Left lung (tissue), 14 donors: ENCODE measurements at regions of chr15 and their contacts with region 1.

Region 1: DNA sequence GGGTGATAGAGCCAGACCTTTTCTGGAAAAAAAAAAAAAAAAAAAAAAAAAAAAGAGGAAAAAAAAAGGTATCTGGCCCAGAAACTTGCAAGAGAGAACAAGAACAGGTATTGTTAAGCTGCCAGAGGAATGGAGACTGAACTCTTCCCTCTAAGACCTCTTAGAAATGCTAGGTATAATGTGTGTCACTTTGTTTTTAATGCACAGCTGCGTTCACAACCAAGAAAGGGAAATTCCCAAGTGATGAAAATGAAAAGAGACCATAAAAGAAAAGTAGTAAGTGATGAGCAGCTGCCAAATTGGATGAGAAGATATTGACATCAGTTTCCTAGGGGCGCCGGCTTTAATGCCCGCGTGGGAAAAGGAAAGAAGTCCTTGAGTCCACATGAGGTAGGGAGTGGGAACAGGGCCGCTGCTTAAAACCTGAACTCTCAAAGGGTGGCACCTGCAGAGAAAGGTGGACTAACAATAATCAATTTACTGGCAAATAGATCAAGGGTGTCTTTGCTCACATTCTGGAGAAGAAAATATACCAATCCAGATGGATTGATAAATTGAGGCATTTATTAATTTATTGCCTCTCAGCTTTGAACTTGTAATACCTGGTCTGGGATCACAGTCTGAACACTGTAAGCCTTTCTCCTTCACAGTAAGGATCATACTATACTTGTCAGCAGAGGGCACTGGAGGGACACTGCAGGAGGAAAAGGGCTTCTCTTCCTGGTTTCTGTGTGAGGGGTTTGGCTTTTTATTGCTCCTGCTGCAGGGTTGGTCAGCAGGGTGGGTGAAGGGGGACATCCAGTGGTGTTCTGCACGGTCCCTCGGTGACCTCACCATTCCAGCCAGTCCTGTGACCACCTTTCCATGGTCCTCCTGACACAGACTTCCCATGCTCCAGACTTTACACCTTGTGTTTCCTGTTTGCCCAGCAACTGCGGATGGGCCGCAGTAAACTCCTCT is 131.6 kb downstream of the AQP9 start:
- DNase-seq: peak in 2 of 4 donors; percentile 24 to 64
- ATAC-seq: peak; percentile 99
- H3K4me3 ChIP-seq: no peak overlapping the region
- H3K27ac ChIP-seq: no peak overlapping the region
- H3K4me1 ChIP-seq: peaks cover 0 to 6% of the 10 kb centered on the region in 2 donors
- H3K27me3 ChIP-seq: no peaks in the 10 kb centered on the region
- CTCF ChIP-seq: peak; percentile 58 to 61

Region 2: DNA sequence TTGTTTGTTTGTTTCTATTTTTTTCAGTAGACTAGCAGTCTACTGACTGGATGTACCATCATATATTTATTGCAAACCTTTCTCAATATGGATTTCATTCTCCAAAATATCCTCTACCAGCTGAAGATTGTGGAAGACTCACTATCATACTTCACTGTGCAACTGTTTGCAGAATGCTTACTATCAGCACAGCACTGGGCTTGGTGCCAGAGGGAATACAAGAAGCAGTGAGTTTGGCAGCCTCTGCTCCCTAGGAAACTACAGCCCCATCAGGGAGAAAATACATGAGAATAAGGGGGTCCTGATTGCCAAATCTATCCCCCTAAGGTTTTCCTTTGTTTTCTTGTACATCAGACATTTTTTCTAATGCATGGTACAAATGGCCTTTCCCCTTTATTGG is 104.1 kb before region 1 on chr15:
- intact Hi-C with region 1: no loop called
- DNase-seq: peak in 3 of 4 donors; percentile 38 to 88 (median 75)
- ATAC-seq: no peak
- H3K4me3 ChIP-seq: no peak overlapping the region
- H3K27ac ChIP-seq: no peak overlapping the region
- H3K4me1 ChIP-seq: no peaks in the 10 kb centered on the region
- H3K27me3 ChIP-seq: peaks cover 0 to 10% of the 10 kb centered on the region in 2 donors
- CTCF ChIP-seq: no peak

Region 3: GRCh38 chr15:58761010-58761388 is 491.3 kb after region 1 on chr15:
- intact Hi-C with region 1: loop called in 1 of 2 experiments (anchors 10 kb)
- DNase-seq: no peak
- ATAC-seq: no peak
- H3K4me3 ChIP-seq: no peak overlapping the region
- H3K27ac ChIP-seq: no peak overlapping the region
- H3K4me1 ChIP-seq: no peaks in the 10 kb centered on the region
- H3K27me3 ChIP-seq: no peaks in the 10 kb centered on the region
- CTCF ChIP-seq: no peak